CD8-positive, alpha-beta T cell (primary cell): ENCODE measurements at regions of chr7 and their contacts with region 1.

Region 1: DNA sequence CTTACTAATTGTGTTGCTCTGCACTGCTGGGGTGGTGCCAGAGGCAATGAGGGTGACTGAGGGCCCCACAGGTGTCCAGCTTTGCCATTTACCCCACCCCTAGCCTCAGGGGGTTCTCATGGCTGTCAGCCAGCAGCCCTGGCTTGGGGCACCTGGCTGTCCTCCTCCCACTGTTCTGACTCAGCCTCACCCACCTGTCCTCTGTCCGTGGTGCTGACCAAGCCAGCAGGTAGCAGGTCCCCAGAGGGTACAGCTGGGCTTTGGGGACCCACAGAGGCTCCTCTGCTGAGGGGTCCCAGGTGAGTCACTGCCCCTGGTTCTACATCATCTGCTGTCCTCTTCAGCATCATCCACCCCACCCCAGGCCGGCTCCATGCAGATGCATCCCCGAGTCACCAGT is 32.2 kb upstream of the ZNF716 start:
- DNase-seq: no peak
- ATAC-seq: no peak
- H3K4me3 ChIP-seq: no peak overlapping the region
- H3K4me3 Mint-ChIP-seq: no peak overlapping the region
- H3K27ac ChIP-seq: no peak overlapping the region
- H3K27ac Mint-ChIP-seq: no peak overlapping the region
- H3K4me1 ChIP-seq: no peaks in the 10 kb centered on the region
- H3K4me1 Mint-ChIP-seq: no peaks in the 10 kb centered on the region
- H3K27me3 ChIP-seq: no peaks in the 10 kb centered on the region
- H3K27me3 Mint-ChIP-seq: no peaks in the 10 kb centered on the region
- CTCF ChIP-seq: no peak

Region 2: GRCh38 chr7:56188823-56189346 is 1228.8 kb before region 1 on chr7:
- CTCF ChIA-PET with region 1: no interaction called
- POLR2A ChIA-PET with region 1: no interaction called
- intact Hi-C with region 1: no loop called
- DNase-seq: no peak
- ATAC-seq: no peak
- H3K4me3 ChIP-seq: no peak overlapping the region
- H3K4me3 Mint-ChIP-seq: no peak overlapping the region
- H3K27ac ChIP-seq: no peak overlapping the region
- H3K27ac Mint-ChIP-seq: no peak overlapping the region
- H3K4me1 ChIP-seq: no peaks in the 10 kb centered on the region
- H3K4me1 Mint-ChIP-seq: no peaks in the 10 kb centered on the region
- H3K27me3 ChIP-seq: no peaks in the 10 kb centered on the region
- H3K27me3 Mint-ChIP-seq: no peaks in the 10 kb centered on the region
- CTCF ChIP-seq: no peak

Region 3: DNA sequence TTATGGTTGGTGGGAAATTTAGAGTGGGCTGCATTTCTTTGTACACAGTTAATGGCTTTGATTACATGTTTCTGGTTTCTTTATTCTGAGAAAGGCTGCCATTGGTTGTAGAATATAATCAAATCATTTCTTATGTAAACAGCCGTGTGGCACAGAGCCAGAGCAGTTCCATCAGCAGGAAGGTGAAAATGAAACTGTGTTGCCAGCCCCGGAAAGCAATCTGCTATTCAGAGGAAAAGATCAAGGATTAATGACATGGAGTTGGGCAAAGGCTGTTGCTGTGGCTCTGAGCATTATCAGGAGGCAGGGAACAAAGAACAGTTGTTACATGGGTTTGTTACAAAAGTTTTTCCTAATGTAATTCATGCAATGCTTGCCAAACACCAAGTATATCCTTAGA is 41.9 kb before region 1 on chr7:
- CTCF ChIA-PET with region 1: no interaction called
- POLR2A ChIA-PET with region 1: no interaction called
- intact Hi-C with region 1: no loop called
- DNase-seq: no peak
- ATAC-seq: no peak
- H3K4me3 ChIP-seq: no peak overlapping the region
- H3K4me3 Mint-ChIP-seq: no peak overlapping the region
- H3K27ac ChIP-seq: no peak overlapping the region
- H3K27ac Mint-ChIP-seq: no peak overlapping the region
- H3K4me1 ChIP-seq: no peaks in the 10 kb centered on the region
- H3K4me1 Mint-ChIP-seq: no peaks in the 10 kb centered on the region
- H3K27me3 ChIP-seq: no peaks in the 10 kb centered on the region
- H3K27me3 Mint-ChIP-seq: no peaks in the 10 kb centered on the region
- CTCF ChIP-seq: no peak

Region 4: DNA sequence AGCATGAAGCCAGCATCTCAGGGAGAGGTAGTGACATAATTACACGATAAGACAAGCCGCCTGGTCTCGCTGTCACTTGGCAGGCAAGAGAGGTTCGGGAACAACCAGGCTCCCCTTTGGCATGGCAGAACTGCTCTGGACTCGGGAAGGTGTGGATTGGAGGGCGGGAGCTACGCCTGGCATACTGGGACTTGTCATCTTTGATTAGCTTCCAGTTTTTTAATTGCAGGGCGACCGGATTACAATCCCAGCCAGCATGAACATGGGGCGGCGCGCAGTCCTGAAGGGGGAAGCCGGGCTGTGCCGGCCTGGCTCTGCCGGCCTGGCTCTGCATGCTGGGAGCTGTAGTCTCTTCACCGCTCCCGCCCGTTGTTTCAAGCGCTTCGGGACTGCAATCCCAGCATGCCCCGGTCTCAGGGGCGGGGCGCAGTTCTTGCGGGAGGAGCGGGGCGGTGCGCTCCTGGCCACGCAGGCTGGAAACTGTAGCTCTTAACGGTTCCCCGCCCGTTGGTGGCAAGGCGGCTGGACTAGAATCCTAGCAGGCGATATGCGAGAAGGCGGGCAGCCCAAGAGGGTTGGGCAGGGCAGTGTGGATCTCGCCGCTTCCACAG is 13.3 kb before region 1 on chr7:
- CTCF ChIA-PET with region 1: no interaction called
- POLR2A ChIA-PET with region 1: no interaction called
- intact Hi-C with region 1: loop called in 1 of 2 experiments (anchors 1 kb)
- DNase-seq: no peak
- ATAC-seq: no peak
- H3K4me3 ChIP-seq: no peak overlapping the region
- H3K4me3 Mint-ChIP-seq: no peak overlapping the region
- H3K27ac ChIP-seq: no peak overlapping the region
- H3K27ac Mint-ChIP-seq: no peak overlapping the region
- H3K4me1 ChIP-seq: no peaks in the 10 kb centered on the region
- H3K4me1 Mint-ChIP-seq: no peaks in the 10 kb centered on the region
- H3K27me3 ChIP-seq: no peaks in the 10 kb centered on the region
- H3K27me3 Mint-ChIP-seq: no peaks in the 10 kb centered on the region
- CTCF ChIP-seq: no peak

Region 5: GRCh38 chr7:57438244-57438643 is 20.5 kb after region 1 on chr7:
- CTCF ChIA-PET with region 1: no interaction called
- POLR2A ChIA-PET with region 1: no interaction called
- intact Hi-C with region 1: no loop called
- DNase-seq: no peak
- ATAC-seq: no peak
- H3K4me3 ChIP-seq: no peak overlapping the region
- H3K4me3 Mint-ChIP-seq: no peak overlapping the region
- H3K27ac ChIP-seq: no peak overlapping the region
- H3K27ac Mint-ChIP-seq: no peak overlapping the region
- H3K4me1 ChIP-seq: no peaks in the 10 kb centered on the region
- H3K4me1 Mint-ChIP-seq: no peaks in the 10 kb centered on the region
- H3K27me3 ChIP-seq: no peaks in the 10 kb centered on the region
- H3K27me3 Mint-ChIP-seq: no peaks in the 10 kb centered on the region
- CTCF ChIP-seq: no peak